ENCODE measurements at regions of chr7 and their contacts with region 1.

Region 1: DNA sequence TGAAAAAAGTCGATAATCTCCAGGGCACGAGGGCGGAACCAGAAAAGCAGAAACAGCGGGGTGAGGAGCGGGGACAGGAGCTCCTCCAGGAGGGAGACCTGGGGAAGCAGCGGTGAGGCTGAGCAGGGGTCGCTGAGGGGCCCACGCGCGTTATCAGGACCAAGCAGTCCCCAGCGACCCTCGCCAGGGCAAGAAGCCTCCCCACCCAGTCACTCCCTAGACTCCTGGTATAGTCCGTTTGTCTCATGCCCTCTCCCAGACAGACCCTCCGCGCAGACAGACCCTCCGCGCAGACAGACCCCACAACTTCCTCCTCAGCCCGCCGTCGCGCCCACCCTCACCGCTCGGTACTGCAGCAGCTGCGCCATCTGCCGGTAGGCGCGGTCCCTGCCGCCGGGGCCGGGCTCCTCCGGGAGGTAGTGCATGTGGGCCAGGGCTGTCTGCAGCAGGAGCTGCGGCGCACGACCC is 6.3 kb downstream of the ATG9B start:
- DNase-seq: peak; percentile 70 to 90 (median 83)
- ATAC-seq: peak; percentile 60
- H3K4me3 ChIP-seq: peak overlapping the region; percentile 40 to 54
- H3K4me3 Mint-ChIP-seq: peak overlapping the region; percentile 83
- H3K27ac ChIP-seq: peak overlapping the region in 1 of 2 experiments; percentile 27
- H3K27ac Mint-ChIP-seq: peak overlapping the region; percentile 39
- H3K4me1 ChIP-seq: peaks cover 61% of the 10 kb centered on the region
- H3K4me1 Mint-ChIP-seq: peaks cover 57% of the 10 kb centered on the region
- H3K27me3 ChIP-seq: peaks cover 0 to 16% of the 10 kb centered on the region in 2 experiments
- H3K27me3 Mint-ChIP-seq: peaks cover 7% of the 10 kb centered on the region
- CTCF ChIP-seq: peak; percentile 99

Region 2: GRCh38 chr7:149381245-149381644 is 1636.7 kb before region 1 on chr7:
- CTCF ChIA-PET with region 1: no interaction called
- POLR2A ChIA-PET with region 1: no interaction called
- intact Hi-C with region 1: no loop called
- DNase-seq: no peak
- ATAC-seq: no peak
- H3K4me3 ChIP-seq: no peak overlapping the region
- H3K4me3 Mint-ChIP-seq: no peak overlapping the region
- H3K27ac ChIP-seq: no peak overlapping the region
- H3K27ac Mint-ChIP-seq: no peak overlapping the region
- H3K4me1 ChIP-seq: no peaks in the 10 kb centered on the region
- H3K4me1 Mint-ChIP-seq: no peaks in the 10 kb centered on the region
- H3K27me3 ChIP-seq: no peaks in the 10 kb centered on the region
- H3K27me3 Mint-ChIP-seq: peaks cover 10% of the 10 kb centered on the region
- CTCF ChIP-seq: no peak

Region 3: DNA sequence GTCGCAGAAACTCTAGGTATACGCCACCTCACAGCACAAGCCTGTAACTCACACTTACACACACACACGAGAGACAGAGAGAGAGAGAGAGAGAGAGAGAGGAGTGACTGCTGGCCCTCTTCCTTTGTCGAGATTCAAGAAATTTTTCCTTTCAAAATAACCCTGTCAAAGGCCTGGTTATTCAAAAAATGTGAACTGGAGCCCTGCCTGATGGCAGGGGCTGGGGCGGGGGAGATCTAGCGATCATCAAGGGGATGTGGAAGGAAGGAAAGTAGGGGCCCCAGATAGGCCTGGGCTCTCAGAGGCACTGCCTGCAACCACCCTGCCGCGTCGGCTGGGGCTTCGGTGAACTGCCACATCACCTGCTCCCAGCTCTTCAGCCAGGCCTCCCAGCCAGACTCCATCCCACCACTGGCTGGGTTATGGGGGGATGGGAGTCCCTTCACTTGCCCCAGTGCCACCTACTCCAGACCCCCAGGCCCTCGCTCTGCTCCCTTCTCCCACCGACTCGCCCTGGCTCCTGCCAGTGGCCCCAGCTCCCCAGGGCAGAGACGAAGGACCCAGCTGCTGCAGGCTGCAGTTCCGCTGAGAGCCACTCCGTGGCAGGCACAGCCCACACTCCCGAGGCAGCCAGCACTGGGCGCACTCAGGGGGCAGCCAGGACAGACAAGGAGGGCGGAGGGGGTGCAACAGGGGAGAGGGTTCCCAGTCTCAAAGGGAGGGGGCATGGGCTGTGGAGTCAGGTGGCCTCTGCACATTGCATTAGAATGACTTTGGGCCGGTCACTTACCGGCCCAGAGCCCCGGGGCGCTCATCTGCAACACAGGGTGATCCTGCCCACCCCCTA is 55.2 kb before region 1 on chr7:
- CTCF ChIA-PET with region 1: interaction called, 40 read pairs
- POLR2A ChIA-PET with region 1: interaction called, 3 read pairs
- intact Hi-C with region 1: loop called in 1 of 2 experiments (anchors 1 kb)
- DNase-seq: peak in 8 of 9 experiments; percentile 40 to 76 (median 66)
- ATAC-seq: peak; percentile 96
- H3K4me3 ChIP-seq: no peak overlapping the region
- H3K4me3 Mint-ChIP-seq: no peak overlapping the region
- H3K27ac ChIP-seq: no peak overlapping the region
- H3K27ac Mint-ChIP-seq: no peak overlapping the region
- H3K4me1 ChIP-seq: peaks cover 5% of the 10 kb centered on the region
- H3K4me1 Mint-ChIP-seq: peaks cover 6% of the 10 kb centered on the region
- H3K27me3 ChIP-seq: peaks cover 6 to 9% of the 10 kb centered on the region in 2 experiments
- H3K27me3 Mint-ChIP-seq: peaks cover 24% of the 10 kb centered on the region
- CTCF ChIP-seq: peak; percentile 86

Region 4: DNA sequence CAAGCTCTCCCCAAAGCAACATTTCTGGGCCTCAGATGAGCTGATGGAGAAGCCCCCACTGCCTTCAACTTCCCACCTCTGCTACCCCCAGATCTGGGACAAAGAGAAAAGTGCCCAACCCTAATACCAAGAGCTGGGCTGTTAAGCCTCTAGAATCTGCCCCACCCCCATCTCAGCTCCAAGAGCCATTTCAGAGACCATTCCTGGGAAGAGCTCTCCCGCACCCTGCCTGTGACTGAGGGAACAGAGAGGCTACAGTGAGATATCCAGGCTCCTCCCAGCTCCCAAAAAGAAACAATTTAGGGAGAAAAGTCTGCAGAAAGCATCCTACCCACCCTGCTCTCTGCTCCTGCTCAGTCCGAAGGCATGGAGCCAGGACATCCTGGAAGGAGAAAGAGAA is 37.3 kb before region 1 on chr7:
- CTCF ChIA-PET with region 1: interaction called, 54 read pairs
- POLR2A ChIA-PET with region 1: interaction called, 8 read pairs
- intact Hi-C with region 1: loop called in 1 of 2 experiments (anchors 1 kb)
- DNase-seq: no peak
- ATAC-seq: no peak
- H3K4me3 ChIP-seq: no peak overlapping the region
- H3K4me3 Mint-ChIP-seq: no peak overlapping the region
- H3K27ac ChIP-seq: no peak overlapping the region
- H3K27ac Mint-ChIP-seq: no peak overlapping the region
- H3K4me1 ChIP-seq: peaks cover 25% of the 10 kb centered on the region
- H3K4me1 Mint-ChIP-seq: peaks cover 18% of the 10 kb centered on the region
- H3K27me3 ChIP-seq: peaks cover 17 to 20% of the 10 kb centered on the region in 2 experiments
- H3K27me3 Mint-ChIP-seq: peaks cover 34% of the 10 kb centered on the region
- CTCF ChIP-seq: no peak

Region 5: GRCh38 chr7:150994141-150994964 is 23.6 kb before region 1 on chr7:
- CTCF ChIA-PET with region 1: interaction called, 36 read pairs
- POLR2A ChIA-PET with region 1: interaction called, 8 read pairs
- intact Hi-C with region 1: loop called in 1 of 2 experiments (anchors 2 kb)
- DNase-seq: peak in 1 of 9 experiments; percentile 43
- ATAC-seq: peak; percentile 54
- H3K4me3 ChIP-seq: no peak overlapping the region
- H3K4me3 Mint-ChIP-seq: peak overlapping the region; percentile 22
- H3K27ac ChIP-seq: no peak overlapping the region
- H3K27ac Mint-ChIP-seq: no peak overlapping the region
- H3K4me1 ChIP-seq: peaks cover 45% of the 10 kb centered on the region
- H3K4me1 Mint-ChIP-seq: peaks cover 36% of the 10 kb centered on the region
- H3K27me3 ChIP-seq: peaks cover 0 to 2% of the 10 kb centered on the region in 2 experiments
- H3K27me3 Mint-ChIP-seq: no peaks in the 10 kb centered on the region
- CTCF ChIP-seq: no peak

Region 6: GRCh38 chr7:151057989-151058780 is 40.2 kb after region 1 on chr7:
- CTCF ChIA-PET with region 1: interaction called, 5 read pairs
- POLR2A ChIA-PET with region 1: interaction called, 5 read pairs
- intact Hi-C with region 1: loop called (anchors 1 to 5 kb)
- DNase-seq: peak; percentile 93 to 100 (median 97)
- ATAC-seq: peak; percentile 93
- H3K4me3 ChIP-seq: peak overlapping the region; percentile 71 to 83
- H3K4me3 Mint-ChIP-seq: peak overlapping the region; percentile 78
- H3K27ac ChIP-seq: peak overlapping the region; percentile 65 to 87
- H3K27ac Mint-ChIP-seq: peak overlapping the region; percentile 89
- H3K4me1 ChIP-seq: peaks cover 34% of the 10 kb centered on the region
- H3K4me1 Mint-ChIP-seq: peaks cover 41% of the 10 kb centered on the region
- H3K27me3 ChIP-seq: no peaks in the 10 kb centered on the region
- H3K27me3 Mint-ChIP-seq: no peaks in the 10 kb centered on the region
- CTCF ChIP-seq: no peak

Measured in CD8-positive, alpha-beta T cell (primary cell).